ENCODE measurements at regions of chr3 and their contacts with region 1.

Region 1: DNA sequence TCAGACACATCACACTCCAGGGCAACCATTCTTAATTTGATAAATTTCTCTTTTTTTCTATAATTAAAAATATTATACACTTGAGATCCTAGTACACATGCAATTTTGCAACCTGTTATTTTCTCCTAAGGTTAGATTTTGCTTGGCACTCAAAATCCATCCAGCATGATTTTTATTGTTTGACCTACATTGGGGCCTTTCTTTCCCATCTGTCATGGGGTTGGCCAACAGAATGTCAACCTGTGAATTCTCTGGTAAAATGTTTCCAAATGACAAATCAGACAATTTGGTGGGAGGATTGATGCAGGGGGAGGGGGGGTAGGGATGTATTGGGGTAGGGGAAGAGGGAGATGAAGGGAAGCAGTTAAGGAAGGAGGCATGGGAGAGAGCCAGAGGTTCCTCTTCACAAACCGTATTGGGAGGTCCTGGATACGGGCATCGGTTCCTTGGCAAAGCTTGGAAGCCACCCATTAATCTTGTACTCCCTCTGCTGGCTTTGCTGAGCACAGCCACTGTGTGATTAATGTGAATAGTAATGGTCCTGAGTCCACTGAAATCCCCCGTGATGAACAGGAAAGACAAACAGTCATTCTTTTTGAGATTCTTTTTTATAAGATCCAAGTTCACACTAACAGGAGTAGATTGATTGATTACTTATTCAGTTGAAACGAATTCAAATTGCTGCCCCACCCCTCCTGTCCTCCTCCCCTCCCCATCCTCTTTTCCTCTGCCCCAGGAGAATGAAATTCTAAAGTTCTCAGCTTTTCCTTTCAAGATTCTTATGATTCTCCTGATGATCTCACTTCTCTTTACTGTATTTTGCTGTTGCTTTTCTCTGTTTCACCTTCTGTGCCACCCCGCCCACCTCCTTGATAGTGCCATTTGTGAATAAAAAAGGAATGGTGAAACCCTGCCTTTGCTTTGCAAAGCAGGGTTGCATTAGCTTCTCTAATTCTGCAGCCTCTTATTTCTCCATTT is 82.2 kb upstream of the SLC25A26 start:
- DNase-seq: peak; percentile 34 to 67
- H3K4me3 ChIP-seq: no peak overlapping the region
- H3K27ac ChIP-seq: no peak overlapping the region
- H3K4me1 ChIP-seq: peaks cover 0 to 4% (median 0%) of the 10 kb centered on the region in 4 experiments; a peak in 2 of 7 replicates
- H3K27me3 ChIP-seq: no peaks in the 10 kb centered on the region
- CTCF ChIP-seq: peak; percentile 56 to 89 (median 85)
- EP300 ChIP-seq: no peak
- POLR2A ChIP-seq: no peak
- RAD21 ChIP-seq: peak; percentile 98

Region 2: DNA sequence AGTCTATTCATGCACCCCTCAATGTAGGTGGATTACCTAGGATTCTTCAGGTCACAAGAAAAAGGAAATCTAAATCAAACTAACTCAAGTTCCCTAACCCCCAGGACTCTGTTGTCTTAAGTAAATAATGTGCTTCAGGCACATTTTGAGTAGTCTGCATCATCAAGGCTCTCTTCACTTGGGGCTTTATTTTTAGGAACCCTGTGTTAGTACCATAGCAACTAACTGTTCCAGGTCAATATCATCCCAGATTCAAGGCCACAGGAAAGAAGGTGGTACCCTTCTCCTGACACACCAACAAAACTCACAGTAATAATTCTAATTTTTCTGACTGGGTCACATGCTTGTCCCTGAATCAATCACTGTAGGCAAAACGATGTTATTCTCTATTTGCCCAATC is 318.0 kb before region 1 on chr3:
- CTCF ChIA-PET with region 1: no interaction called
- POLR2A ChIA-PET with region 1: no interaction called
- DNase-seq: no peak
- H3K4me3 ChIP-seq: no peak overlapping the region
- H3K27ac ChIP-seq: no peak overlapping the region
- H3K4me1 ChIP-seq: peaks cover 0 to 10% (median 3%) of the 10 kb centered on the region in 4 experiments; a peak in 1 of 7 replicates
- H3K27me3 ChIP-seq: no peaks in the 10 kb centered on the region; a peak in 2 of 7 replicates
- CTCF ChIP-seq: no peak
- EP300 ChIP-seq: no peak
- POLR2A ChIP-seq: no peak
- RAD21 ChIP-seq: no peak

Region 3: GRCh38 chr3:66149269-66149668 is 10.6 kb after region 1 on chr3:
- CTCF ChIA-PET with region 1: interaction called, 16 read pairs
- POLR2A ChIA-PET with region 1: no interaction called
- DNase-seq: no peak
- H3K4me3 ChIP-seq: no peak overlapping the region
- H3K27ac ChIP-seq: no peak overlapping the region
- H3K4me1 ChIP-seq: peaks cover 0 to 10% (median 2%) of the 10 kb centered on the region in 4 experiments; a peak in 2 of 7 replicates
- H3K27me3 ChIP-seq: no peaks in the 10 kb centered on the region
- CTCF ChIP-seq: no peak
- EP300 ChIP-seq: no peak
- POLR2A ChIP-seq: no peak
- RAD21 ChIP-seq: no peak